Heart left ventricle (tissue), 16 donors: ENCODE measurements at regions of chrX and their contacts with region 1.

Region 1: GRCh38 chrX:53824676-53825075 is 138.2 kb upstream of the HUWE1 start:
- DNase-seq: no peak
- ATAC-seq: no peak
- H3K4me3 ChIP-seq: no peak overlapping the region
- H3K27ac ChIP-seq: no peak overlapping the region
- H3K4me1 ChIP-seq: no peaks in the 10 kb centered on the region
- H3K27me3 ChIP-seq: peaks cover 0 to 4% (median 0%) of the 10 kb centered on the region in 9 donors
- CTCF ChIP-seq: no peak
- POLR2A ChIP-seq: no peak

Region 2: DNA sequence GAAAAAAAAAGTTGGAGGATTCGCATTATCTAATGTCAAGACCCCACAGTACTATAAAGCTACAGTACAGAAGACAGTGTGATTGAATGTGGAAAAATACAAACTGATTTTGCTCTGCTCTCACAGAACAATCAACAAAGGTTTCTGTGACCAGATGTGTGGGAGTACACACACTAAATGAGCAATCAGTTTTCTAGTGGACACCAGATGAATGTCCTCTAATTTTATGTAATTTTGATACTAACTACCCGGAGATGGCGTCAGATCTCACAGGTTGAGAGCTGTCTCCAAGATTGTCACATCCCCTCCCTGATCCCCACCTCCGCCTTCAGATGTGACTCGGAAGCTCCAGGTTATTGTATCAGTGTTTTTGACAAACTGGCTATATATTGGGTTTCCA is 56.2 kb before region 1 on chrX:
- intact Hi-C with region 1: loop called in 1 of 10 experiments (anchors 10 kb)
- DNase-seq: no peak
- ATAC-seq: no peak
- H3K4me3 ChIP-seq: no peak overlapping the region
- H3K27ac ChIP-seq: no peak overlapping the region
- H3K4me1 ChIP-seq: no peaks in the 10 kb centered on the region
- H3K27me3 ChIP-seq: no peaks in the 10 kb centered on the region
- CTCF ChIP-seq: no peak
- POLR2A ChIP-seq: no peak

Region 3: GRCh38 chrX:53990171-53990570 is 165.5 kb after region 1 on chrX:
- intact Hi-C with region 1: no loop called
- DNase-seq: no peak
- ATAC-seq: no peak
- H3K4me3 ChIP-seq: no peak overlapping the region
- H3K27ac ChIP-seq: no peak overlapping the region
- H3K4me1 ChIP-seq: peaks cover 0 to 3% (median 0%) of the 10 kb centered on the region in 12 donors
- H3K27me3 ChIP-seq: no peaks in the 10 kb centered on the region
- CTCF ChIP-seq: no peak
- POLR2A ChIP-seq: no peak